ENCODE measurements at regions of chr10 and their contacts with region 1.

Region 1: GRCh38 chr10:96586419-96587263 is at the start of gene TM9SF3:
- DNase-seq: peak; percentile 87 to 90
- H3K4me3 ChIP-seq: peak within 1 kb of the TSS; percentile 91 to 98 (median 94)
- H3K27ac ChIP-seq: peak within 1 kb of the TSS; percentile 99 to 100
- H3K4me1 ChIP-seq: peaks cover 0 to 8% of the 10 kb centered on the region in 2 donors
- H3K27me3 ChIP-seq: no peaks in the 10 kb centered on the region
- CTCF ChIP-seq: no peak
- POLR2A ChIP-seq: no peak
- total RNA-seq, gene TM9SF3: 95.7 to 118 (median 116) TPM

Region 2: DNA sequence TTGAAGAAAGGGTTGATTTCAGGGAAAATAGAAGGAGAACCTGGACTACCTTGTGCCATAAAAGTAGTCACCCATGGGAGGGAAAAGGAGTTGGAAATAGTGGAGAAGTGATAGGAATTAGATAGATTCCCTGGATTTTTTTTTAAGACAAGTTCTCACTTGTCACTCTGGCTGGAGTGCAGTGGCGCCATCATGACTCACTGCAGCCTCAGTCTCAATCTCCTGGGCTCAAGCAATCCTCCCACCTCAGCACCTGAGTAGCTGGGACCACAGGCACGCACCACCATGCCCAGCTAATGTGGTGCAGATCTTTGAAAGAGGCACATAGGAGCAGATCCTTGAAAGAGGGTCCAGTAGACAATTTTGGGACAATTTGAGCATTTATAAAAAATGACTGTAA is 305.8 kb before region 1 on chr10:
- intact Hi-C with region 1: loop called (anchors 5 kb)
- DNase-seq: no peak
- H3K4me3 ChIP-seq: no peak overlapping the region
- H3K27ac ChIP-seq: no peak overlapping the region
- H3K4me1 ChIP-seq: no peaks in the 10 kb centered on the region
- H3K27me3 ChIP-seq: no peaks in the 10 kb centered on the region
- CTCF ChIP-seq: no peak
- POLR2A ChIP-seq: no peak

Region 3: DNA sequence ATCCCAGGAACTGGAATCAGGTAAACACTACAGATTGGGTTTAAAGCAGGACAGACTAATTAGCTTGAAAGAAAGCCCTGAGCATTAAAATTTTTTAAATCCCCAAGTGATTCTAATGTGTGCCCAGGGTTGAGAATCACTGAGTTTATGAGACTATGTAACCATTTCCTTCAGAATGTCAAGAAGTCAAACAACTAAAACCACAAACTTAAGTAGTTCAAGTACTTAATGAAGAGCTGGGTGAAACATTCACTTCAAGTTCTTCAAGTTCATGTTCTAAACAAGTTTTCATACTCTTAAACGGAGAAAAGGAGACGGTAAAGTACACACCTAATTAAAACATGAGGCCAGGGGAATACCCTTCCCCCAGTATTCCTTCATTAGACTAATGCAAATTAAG is 44.7 kb before region 1 on chr10:
- intact Hi-C with region 1: no loop called
- DNase-seq: no peak
- H3K4me3 ChIP-seq: no peak overlapping the region
- H3K27ac ChIP-seq: no peak overlapping the region
- H3K4me1 ChIP-seq: no peaks in the 10 kb centered on the region
- H3K27me3 ChIP-seq: no peaks in the 10 kb centered on the region
- CTCF ChIP-seq: no peak
- POLR2A ChIP-seq: no peak

Region 4: GRCh38 chr10:96651998-96652431 is 65.4 kb after region 1 on chr10:
- intact Hi-C with region 1: no loop called
- DNase-seq: no peak
- H3K4me3 ChIP-seq: no peak overlapping the region
- H3K27ac ChIP-seq: no peak overlapping the region
- H3K4me1 ChIP-seq: no peaks in the 10 kb centered on the region
- H3K27me3 ChIP-seq: no peaks in the 10 kb centered on the region
- CTCF ChIP-seq: no peak
- POLR2A ChIP-seq: no peak

Region 5: GRCh38 chr10:96664563-96664962 is 77.9 kb after region 1 on chr10:
- intact Hi-C with region 1: no loop called
- DNase-seq: no peak
- H3K4me3 ChIP-seq: no peak overlapping the region
- H3K27ac ChIP-seq: no peak overlapping the region
- H3K4me1 ChIP-seq: no peaks in the 10 kb centered on the region
- H3K27me3 ChIP-seq: no peaks in the 10 kb centered on the region
- CTCF ChIP-seq: no peak
- POLR2A ChIP-seq: no peak

Region 6: DNA sequence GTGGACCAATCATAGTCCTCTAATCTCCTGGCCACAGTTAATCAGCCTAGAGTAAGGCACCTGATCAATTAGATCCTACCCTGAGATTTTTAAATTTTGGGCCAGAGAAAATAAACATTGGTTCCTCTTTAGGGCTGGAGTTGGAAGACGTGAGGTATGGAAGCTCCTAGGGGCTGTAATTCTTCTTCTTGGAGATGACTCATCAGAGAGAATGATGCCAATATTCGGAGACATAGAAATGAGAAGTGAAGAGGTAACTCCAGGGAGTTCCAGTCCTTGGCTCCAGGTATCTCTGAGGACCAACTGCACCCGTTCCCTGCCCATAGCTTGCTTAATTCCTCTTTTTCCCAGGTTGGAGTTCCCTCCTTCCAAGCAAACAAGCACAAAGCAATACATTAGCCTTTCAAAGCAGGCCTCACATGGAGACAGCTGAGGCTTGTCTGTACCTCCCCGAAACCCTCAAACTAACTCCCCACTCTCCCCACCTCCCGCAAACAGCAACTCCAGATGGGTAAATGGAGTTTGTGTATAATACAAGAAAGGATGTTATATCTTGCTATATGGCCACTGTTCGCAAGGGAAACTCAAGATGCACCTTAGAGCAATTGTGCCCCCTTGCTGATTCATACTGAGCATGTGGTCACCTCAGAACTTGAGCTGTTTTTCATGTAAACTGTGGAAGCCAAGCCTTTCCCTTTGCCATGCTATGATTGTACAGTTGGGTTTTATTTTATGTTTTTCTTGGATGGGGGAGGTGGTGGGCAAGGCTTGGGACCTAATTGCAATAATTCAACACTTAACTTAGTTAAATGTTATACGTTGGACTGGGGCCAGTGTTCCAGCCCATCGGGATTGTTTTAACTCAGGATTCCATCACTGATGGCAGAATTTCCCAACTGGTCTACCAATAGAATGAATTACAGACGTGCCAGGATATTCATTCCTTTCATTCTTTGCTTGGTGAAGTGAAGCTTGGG is 104.4 kb after region 1 on chr10:
- intact Hi-C with region 1: no loop called
- DNase-seq: no peak
- H3K4me3 ChIP-seq: no peak overlapping the region
- H3K27ac ChIP-seq: no peak overlapping the region
- H3K4me1 ChIP-seq: no peaks in the 10 kb centered on the region
- H3K27me3 ChIP-seq: no peaks in the 10 kb centered on the region
- CTCF ChIP-seq: no peak
- POLR2A ChIP-seq: no peak

Region 7: GRCh38 chr10:97714048-97714371 is 1127.4 kb after region 1 on chr10:
- intact Hi-C with region 1: loop called (anchors 5 kb)
- DNase-seq: peak; percentile 65 to 66
- H3K4me3 ChIP-seq: peak overlapping the region; percentile 53 to 89 (median 75)
- H3K27ac ChIP-seq: peak overlapping the region; percentile 92 to 93
- H3K4me1 ChIP-seq: peaks cover 14 to 15% of the 10 kb centered on the region in 2 donors
- H3K27me3 ChIP-seq: no peaks in the 10 kb centered on the region
- CTCF ChIP-seq: no peak
- POLR2A ChIP-seq: no peak